ENCODE measurements at regions of chr13 and their contacts with region 1.

Region 1: GRCh38 chr13:43650882-43651281 is 135.9 kb downstream of the ENOX1 start:
- DNase-seq: no peak
- H3K4me3 ChIP-seq: no peak overlapping the region
- H3K27ac ChIP-seq: no peak overlapping the region
- H3K4me1 ChIP-seq: no peaks in the 10 kb centered on the region
- H3K27me3 ChIP-seq: no peaks in the 10 kb centered on the region
- CTCF ChIP-seq: no peak

Region 2: GRCh38 chr13:43664700-43665191 is 13.9 kb after region 1 on chr13:
- CTCF ChIA-PET with region 1: interaction called, 20 read pairs
- dilution Hi-C with region 1: no loop called
- in situ Hi-C with region 1: no loop called
- intact Hi-C with region 1: no loop called
- DNase-seq: peak; percentile 22
- H3K4me3 ChIP-seq: no peak overlapping the region
- H3K27ac ChIP-seq: no peak overlapping the region
- H3K4me1 ChIP-seq: peaks cover 8% of the 10 kb centered on the region
- H3K27me3 ChIP-seq: no peaks in the 10 kb centered on the region
- CTCF ChIP-seq: no peak

Measured in mammary epithelial cell (primary cell).